ENCODE measurements at regions of chr17 and their contacts with region 1.

Region 1: DNA sequence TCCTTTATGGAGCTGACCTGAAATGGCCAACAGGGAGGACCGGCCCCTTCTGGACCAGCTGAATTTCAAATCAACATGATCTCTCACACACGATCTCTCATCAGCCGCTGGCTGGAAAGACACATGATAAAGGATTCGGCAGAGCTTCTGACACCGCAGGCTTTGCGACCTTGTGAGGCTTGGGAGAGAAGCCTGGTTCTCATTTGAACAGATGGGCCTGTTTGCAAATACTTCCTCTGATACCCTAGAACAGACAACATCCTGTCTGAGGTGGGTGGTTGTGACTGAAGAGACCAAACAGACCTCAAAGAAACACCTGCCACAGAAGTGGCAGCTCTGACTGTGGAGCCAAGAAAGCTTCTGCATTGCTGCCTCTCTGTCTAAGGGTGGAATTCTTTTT is 77.9 kb upstream of the SDK2 start:
- DNase-seq: peak; percentile 65
- H3K4me3 Mint-ChIP-seq: peak overlapping the region; percentile 63
- H3K27ac Mint-ChIP-seq: peak overlapping the region; percentile 87
- H3K4me1 Mint-ChIP-seq: peaks cover 37% of the 10 kb centered on the region
- H3K27me3 Mint-ChIP-seq: no peaks in the 10 kb centered on the region

Region 2: DNA sequence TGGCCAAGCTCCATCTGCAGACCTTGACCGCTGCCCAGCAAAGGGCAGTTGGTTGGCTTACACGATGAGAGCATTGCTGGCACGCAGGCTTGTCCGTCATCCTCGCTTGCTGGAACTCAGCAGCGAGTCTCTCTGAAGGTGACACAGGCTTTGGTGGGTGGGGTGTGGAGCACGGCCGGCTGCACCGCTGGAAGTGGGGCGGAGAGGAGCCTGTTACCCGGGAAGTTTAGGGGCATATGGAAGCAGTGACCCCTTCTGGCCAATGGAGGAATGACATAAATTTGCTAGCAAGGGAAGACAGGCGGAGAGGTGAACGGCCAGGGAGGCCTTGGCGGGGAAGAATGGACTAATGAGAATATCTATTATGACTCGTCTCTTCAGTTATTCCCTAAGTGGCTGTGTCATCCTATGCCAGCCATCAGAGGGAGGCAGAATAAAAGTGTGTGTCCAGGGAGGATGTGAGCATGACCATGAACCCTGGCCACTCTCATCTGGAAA is 12.0 kb before region 1 on chr17:
- CTCF ChIA-PET with region 1: interaction called, 13 read pairs
- POLR2A ChIA-PET with region 1: interaction called, 4 read pairs
- DNase-seq: peak; percentile 68
- H3K4me3 Mint-ChIP-seq: no peak overlapping the region
- H3K27ac Mint-ChIP-seq: no peak overlapping the region
- H3K4me1 Mint-ChIP-seq: peaks cover 9% of the 10 kb centered on the region
- H3K27me3 Mint-ChIP-seq: peaks cover 9% of the 10 kb centered on the region